K562 (cell line): ENCODE measurements at regions of chr1 and their contacts with region 1.

Region 1: GRCh38 chr1:246450611-246451251 is 56.3 kb downstream of the SMYD3 start:
- DNase-seq: peak; percentile 41 to 57 (median 56)
- ATAC-seq: peak; percentile 85
- H3K4me3 ChIP-seq: no peak overlapping the region
- H3K27ac ChIP-seq: no peak overlapping the region
- H3K4me1 ChIP-seq: no peaks in the 10 kb centered on the region
- H3K27me3 ChIP-seq: no peaks in the 10 kb centered on the region
- CTCF ChIP-seq: peak; percentile 63 to 95 (median 69)
- EP300 ChIP-seq: no peak
- POLR2A ChIP-seq: no peak
- RAD21 ChIP-seq: peak; percentile 96 to 97

Region 2: DNA sequence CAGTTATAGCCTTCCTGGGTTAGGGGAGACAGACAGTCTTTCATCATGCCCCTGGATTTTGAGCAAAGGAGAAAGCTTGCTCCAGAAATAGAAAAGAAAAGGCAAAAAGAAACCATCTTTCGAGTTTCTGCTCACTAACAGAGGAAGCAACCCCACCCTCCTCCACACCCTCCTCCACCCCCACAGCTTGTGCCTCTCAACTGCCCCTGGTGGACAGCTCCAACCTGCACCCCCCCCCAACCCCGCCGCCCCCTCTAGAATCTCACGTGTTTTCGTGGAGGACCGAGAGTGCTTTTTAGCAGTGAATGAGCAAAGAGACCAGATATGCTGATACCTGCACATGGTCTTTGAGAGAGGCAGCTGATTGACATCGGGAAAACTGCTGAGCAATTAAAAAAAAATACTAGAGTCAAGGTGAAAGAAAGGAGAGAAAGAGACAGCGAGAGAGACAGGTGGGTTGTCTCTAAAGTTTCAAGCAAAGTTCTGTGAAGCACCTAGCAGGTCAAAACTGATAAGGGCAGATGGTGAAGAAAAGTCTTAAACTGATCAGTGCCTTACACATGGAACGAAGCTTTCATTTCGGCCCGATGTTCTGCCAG is 937.7 kb before region 1 on chr1:
- CTCF ChIA-PET with region 1: no interaction called
- POLR2A ChIA-PET with region 1: no interaction called
- in situ Hi-C with region 1: no loop called
- intact Hi-C with region 1: loop called (anchors 2 kb)
- DNase-seq: peak; percentile 54 to 72 (median 56)
- ATAC-seq: peak; percentile 97
- H3K4me3 ChIP-seq: no peak overlapping the region
- H3K27ac ChIP-seq: no peak overlapping the region
- H3K4me1 ChIP-seq: no peaks in the 10 kb centered on the region
- H3K27me3 ChIP-seq: peaks cover 24 to 44% of the 10 kb centered on the region in 2 experiments
- CTCF ChIP-seq: peak in 2 of 3 experiments; percentile 26 to 54; a peak in 3 of 6 replicates
- EP300 ChIP-seq: no peak
- POLR2A ChIP-seq: no peak
- RAD21 ChIP-seq: no peak

Region 3: GRCh38 chr1:246117066-246117791 is 333.5 kb before region 1 on chr1:
- CTCF ChIA-PET with region 1: no interaction called
- POLR2A ChIA-PET with region 1: no interaction called
- in situ Hi-C with region 1: no loop called
- intact Hi-C with region 1: loop called (anchors 5 kb)
- DNase-seq: peak; percentile 53 to 85 (median 63)
- ATAC-seq: peak; percentile 88
- H3K4me3 ChIP-seq: no peak overlapping the region
- H3K27ac ChIP-seq: peak overlapping the region; percentile 38; the same call in 1 of the 3 replicates
- H3K4me1 ChIP-seq: peaks cover 4 to 38% of the 10 kb centered on the region in 2 experiments; a peak in 4 of 5 replicates
- H3K27me3 ChIP-seq: no peaks in the 10 kb centered on the region
- CTCF ChIP-seq: peak; percentile 62 to 74 (median 72)
- EP300 ChIP-seq: no peak
- POLR2A ChIP-seq: no peak
- RAD21 ChIP-seq: peak; percentile 73 to 82; a peak in 3 of 4 replicates

Region 4: GRCh38 chr1:246181241-246181640 is 269.5 kb before region 1 on chr1:
- CTCF ChIA-PET with region 1: no interaction called
- POLR2A ChIA-PET with region 1: no interaction called
- in situ Hi-C with region 1: no loop called
- intact Hi-C with region 1: no loop called
- DNase-seq: no peak
- ATAC-seq: 0 out of 3 replicates have a peak, but pooled peaks have one; percentile 4
- H3K4me3 ChIP-seq: no peak overlapping the region
- H3K27ac ChIP-seq: peak overlapping the region; percentile 67; the same call in 2 of the 3 replicates
- H3K4me1 ChIP-seq: peaks cover 4 to 47% of the 10 kb centered on the region in 2 experiments; a peak in 4 of 5 replicates
- H3K27me3 ChIP-seq: no peaks in the 10 kb centered on the region
- CTCF ChIP-seq: no peak
- EP300 ChIP-seq: no peak
- POLR2A ChIP-seq: no peak
- RAD21 ChIP-seq: no peak

Region 5: GRCh38 chr1:246203180-246203579 is 247.6 kb before region 1 on chr1:
- CTCF ChIA-PET with region 1: no interaction called
- POLR2A ChIA-PET with region 1: no interaction called
- in situ Hi-C with region 1: no loop called
- intact Hi-C with region 1: loop called (anchors 5 kb)
- DNase-seq: no peak
- ATAC-seq: peak; percentile 89
- H3K4me3 ChIP-seq: no peak overlapping the region
- H3K27ac ChIP-seq: no peak overlapping the region
- H3K4me1 ChIP-seq: peaks cover 0 to 15% of the 10 kb centered on the region in 2 experiments; a peak in 2 of 5 replicates
- H3K27me3 ChIP-seq: no peaks in the 10 kb centered on the region
- CTCF ChIP-seq: peak; percentile 45 to 69 (median 55); a peak in 5 of 6 replicates
- EP300 ChIP-seq: no peak
- POLR2A ChIP-seq: no peak
- RAD21 ChIP-seq: peak; percentile 13 to 74; a peak in 2 of 4 replicates

Region 6: GRCh38 chr1:246280551-246280950 is 170.2 kb before region 1 on chr1:
- CTCF ChIA-PET with region 1: interaction called, 5 read pairs
- POLR2A ChIA-PET with region 1: no interaction called
- in situ Hi-C with region 1: no loop called
- intact Hi-C with region 1: loop called (anchors 1 kb)
- DNase-seq: peak in 1 of 4 experiments; percentile 58
- ATAC-seq: peak; percentile 86
- H3K4me3 ChIP-seq: no peak overlapping the region
- H3K27ac ChIP-seq: no peak overlapping the region
- H3K4me1 ChIP-seq: no peaks in the 10 kb centered on the region; a peak in 3 of 5 replicates
- H3K27me3 ChIP-seq: no peaks in the 10 kb centered on the region
- CTCF ChIP-seq: peak; percentile 36 to 75 (median 59); a peak in 5 of 6 replicates
- EP300 ChIP-seq: no peak
- POLR2A ChIP-seq: no peak
- RAD21 ChIP-seq: peak; percentile 93 to 96

Region 7: DNA sequence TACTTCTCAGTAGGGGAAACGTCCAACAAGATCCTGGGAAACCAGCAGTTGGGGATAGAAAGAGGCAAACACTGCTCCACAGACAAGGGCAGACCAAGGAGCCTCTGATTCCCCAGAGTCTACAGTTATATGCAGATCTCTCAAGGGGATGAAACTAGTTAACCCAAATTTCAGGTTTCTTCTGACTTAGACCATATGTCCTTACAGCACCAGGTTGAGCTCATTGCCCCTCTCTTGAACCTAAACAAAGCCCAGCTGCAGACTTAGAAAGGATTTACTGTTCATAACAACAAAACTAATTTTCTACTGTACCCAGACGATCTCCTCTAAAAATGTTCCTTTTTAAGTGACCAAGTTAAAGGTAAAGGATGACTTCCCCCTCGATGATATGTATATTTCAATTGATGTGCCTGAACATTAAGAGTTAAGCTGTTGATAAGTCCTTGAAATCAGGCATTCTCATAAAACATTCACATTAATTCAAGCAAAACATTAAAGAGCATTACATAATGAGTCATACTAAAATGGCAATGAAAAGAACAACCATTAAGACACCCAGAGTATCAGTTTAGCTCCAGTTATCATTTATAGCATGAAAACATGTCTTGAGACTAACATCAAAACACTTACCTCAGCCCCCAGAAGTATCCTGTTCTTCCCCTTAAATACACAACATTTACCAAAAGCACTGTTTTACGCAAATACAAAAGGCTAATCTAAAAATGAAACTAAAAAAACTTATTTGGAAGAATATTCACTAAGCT is 32.3 kb after region 1 on chr1:
- CTCF ChIA-PET with region 1: no interaction called
- POLR2A ChIA-PET with region 1: no interaction called
- in situ Hi-C with region 1: no loop called
- intact Hi-C with region 1: no loop called
- DNase-seq: no peak
- ATAC-seq: no peak
- H3K4me3 ChIP-seq: no peak overlapping the region
- H3K27ac ChIP-seq: no peak overlapping the region
- H3K4me1 ChIP-seq: no peaks in the 10 kb centered on the region
- H3K27me3 ChIP-seq: no peaks in the 10 kb centered on the region
- CTCF ChIP-seq: no peak
- EP300 ChIP-seq: no peak
- POLR2A ChIP-seq: no peak
- RAD21 ChIP-seq: no peak

Region 8: DNA sequence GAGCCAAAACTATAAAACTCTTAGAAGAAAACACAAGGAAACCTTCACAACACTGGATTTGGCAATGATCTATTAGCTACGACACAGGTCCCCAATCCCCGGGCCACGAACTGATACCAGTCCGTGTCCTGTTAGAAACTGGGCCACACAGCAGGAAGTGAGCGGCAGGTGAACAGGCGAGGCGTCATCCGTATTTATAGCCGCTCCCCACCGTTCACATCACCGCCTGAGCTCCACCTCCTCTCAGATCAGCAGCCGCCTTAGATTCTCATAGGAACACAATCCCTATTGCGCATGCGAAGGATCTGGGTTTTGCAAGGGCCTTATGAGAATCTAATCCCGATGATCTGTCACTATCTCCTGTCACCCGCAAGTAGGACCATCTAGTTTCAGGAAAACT is 103.5 kb after region 1 on chr1:
- CTCF ChIA-PET with region 1: no interaction called
- POLR2A ChIA-PET with region 1: no interaction called
- in situ Hi-C with region 1: no loop called
- intact Hi-C with region 1: no loop called
- DNase-seq: no peak
- ATAC-seq: no peak
- H3K4me3 ChIP-seq: no peak overlapping the region
- H3K27ac ChIP-seq: no peak overlapping the region
- H3K4me1 ChIP-seq: no peaks in the 10 kb centered on the region
- H3K27me3 ChIP-seq: no peaks in the 10 kb centered on the region
- CTCF ChIP-seq: no peak
- EP300 ChIP-seq: no peak
- POLR2A ChIP-seq: no peak
- RAD21 ChIP-seq: no peak